Colonic mucosa (tissue), 4 donors: ENCODE measurements at regions of chr15 and their contacts with region 1.

Region 1: GRCh38 chr15:80970018-80970658 is 19.5 kb downstream of the MESD start:
- DNase-seq: peak; percentile 73
- H3K4me3 ChIP-seq: no peak overlapping the region
- H3K27ac ChIP-seq: no peak overlapping the region
- H3K4me1 ChIP-seq: no peaks in the 10 kb centered on the region
- H3K27me3 ChIP-seq: no peaks in the 10 kb centered on the region
- CTCF ChIP-seq: peak; percentile 81

Region 2: DNA sequence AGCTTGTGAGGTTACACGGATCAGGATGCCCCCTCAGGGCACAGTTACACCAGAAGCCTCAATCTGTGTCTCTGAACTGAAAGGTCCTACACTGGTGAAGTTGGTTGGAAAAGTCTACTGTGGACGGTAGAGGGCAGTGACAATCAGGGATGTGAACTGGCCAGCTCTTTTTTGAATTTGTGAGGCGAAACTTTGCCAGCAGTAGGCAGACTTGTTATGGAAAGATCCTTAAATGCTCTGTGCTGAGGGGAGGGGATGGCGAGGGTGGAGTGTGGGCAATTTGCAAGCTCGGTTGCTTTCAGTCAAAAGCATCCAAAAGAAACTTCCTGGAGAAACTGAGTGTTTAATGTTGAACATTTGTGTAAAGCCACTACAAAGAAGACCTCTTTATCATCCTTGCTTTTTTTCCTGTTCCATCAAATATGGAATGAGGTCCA is 402.4 kb before region 1 on chr15:
- intact Hi-C with region 1: loop called (anchors 2 kb)
- DNase-seq: peak; percentile 71
- H3K4me3 ChIP-seq: no peak overlapping the region
- H3K27ac ChIP-seq: no peak overlapping the region
- H3K4me1 ChIP-seq: no peaks in the 10 kb centered on the region
- H3K27me3 ChIP-seq: no peaks in the 10 kb centered on the region
- CTCF ChIP-seq: peak; percentile 56

Region 3: DNA sequence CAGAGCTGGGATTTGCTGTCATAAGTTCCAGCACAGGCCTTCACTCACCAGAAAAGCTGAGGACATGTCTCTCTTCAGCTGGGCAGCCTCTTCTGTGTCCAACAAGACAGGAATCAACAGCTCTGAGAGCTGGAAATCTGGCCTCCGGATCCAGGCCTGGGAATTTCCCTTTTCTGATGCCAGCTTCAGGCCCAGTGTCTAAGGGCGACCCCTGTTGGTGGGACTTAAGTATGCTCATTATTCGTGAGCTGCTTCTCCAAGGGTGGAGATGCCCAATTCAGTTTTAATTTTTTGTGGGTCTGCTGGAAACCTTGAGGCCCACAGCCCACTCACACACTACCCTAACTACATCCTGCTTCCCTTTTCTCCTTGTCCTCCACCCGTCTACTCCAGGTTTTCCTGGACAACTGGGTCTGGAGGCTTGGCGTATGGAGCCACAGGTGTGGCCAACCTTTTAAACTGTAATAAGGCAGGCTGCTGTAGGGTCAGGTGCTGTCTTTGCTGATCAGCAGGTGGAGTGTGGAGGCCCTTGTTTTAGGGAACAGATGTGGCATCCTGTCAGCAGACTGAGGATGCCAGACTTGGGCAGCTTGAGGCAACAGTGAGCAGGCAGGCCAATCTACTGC is 193.6 kb before region 1 on chr15:
- intact Hi-C with region 1: loop called (anchors 2 kb)
- DNase-seq: peak; percentile 84
- H3K4me3 ChIP-seq: no peak overlapping the region
- H3K27ac ChIP-seq: peak overlapping the region; percentile 66
- H3K4me1 ChIP-seq: peaks cover 11% of the 10 kb centered on the region
- H3K27me3 ChIP-seq: peaks cover 17% of the 10 kb centered on the region
- CTCF ChIP-seq: peak; percentile 84

Region 4: DNA sequence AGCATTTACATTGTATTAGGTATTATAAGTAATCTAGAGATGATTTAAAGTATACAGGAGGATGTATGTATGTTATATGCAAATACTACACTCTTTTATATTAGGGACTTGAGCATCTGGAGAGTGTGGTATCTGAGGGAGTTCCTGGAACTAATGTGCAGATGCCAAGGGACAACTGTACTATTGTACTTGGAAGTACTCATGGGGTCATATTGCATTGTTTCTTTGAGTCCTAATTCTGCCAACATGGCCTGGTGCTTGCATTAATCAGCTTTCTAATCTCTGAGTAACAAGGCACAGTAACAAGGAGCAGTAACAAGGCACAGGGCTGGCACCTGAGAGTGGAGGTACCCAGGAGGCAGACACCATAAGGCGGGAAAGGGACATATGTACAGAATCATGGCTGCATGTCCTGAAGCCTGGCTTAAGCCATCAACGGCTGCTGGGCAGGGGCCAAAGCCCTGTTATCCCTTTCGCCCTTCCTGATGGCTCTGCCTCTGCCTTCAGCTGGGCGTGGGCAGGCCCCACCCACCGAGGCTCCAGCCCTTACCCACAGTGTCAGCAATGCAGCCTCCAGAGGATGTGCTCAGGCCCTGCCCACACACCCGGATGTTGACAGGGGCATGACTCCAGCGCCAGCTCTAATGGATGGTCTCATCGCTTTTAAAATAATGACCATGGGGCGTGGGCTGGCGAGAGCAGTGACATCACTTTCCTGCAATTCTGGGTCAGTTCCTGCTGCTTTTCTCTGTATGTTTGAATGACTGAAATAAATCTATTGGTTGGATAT is 168.1 kb before region 1 on chr15:
- intact Hi-C with region 1: no loop called
- DNase-seq: peak; percentile 67
- H3K4me3 ChIP-seq: no peak overlapping the region
- H3K27ac ChIP-seq: no peak overlapping the region
- H3K4me1 ChIP-seq: no peaks in the 10 kb centered on the region
- H3K27me3 ChIP-seq: no peaks in the 10 kb centered on the region
- CTCF ChIP-seq: no peak

Region 5: DNA sequence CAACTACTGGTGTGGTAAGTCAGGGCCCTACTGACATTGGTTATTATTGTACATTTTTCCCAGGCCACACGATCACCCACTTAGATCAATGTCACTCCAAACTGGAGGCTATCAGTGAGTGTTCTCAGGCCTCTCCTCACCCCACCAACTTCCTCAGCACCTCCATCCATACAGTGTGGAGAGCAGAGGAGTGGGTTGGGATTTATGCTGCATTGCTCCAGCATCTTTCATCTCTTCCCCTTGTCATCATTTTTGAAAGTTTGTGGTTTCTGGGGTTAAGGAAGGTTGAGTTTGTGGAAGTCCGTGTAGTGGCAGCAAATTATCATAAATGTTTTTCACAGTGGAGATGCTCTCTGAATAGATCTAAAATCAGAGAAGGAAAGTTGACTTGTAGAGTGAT is 90.8 kb after region 1 on chr15:
- intact Hi-C with region 1: no loop called
- DNase-seq: no peak
- H3K4me3 ChIP-seq: no peak overlapping the region
- H3K27ac ChIP-seq: no peak overlapping the region
- H3K4me1 ChIP-seq: no peaks in the 10 kb centered on the region
- H3K27me3 ChIP-seq: no peaks in the 10 kb centered on the region
- CTCF ChIP-seq: no peak

Region 6: DNA sequence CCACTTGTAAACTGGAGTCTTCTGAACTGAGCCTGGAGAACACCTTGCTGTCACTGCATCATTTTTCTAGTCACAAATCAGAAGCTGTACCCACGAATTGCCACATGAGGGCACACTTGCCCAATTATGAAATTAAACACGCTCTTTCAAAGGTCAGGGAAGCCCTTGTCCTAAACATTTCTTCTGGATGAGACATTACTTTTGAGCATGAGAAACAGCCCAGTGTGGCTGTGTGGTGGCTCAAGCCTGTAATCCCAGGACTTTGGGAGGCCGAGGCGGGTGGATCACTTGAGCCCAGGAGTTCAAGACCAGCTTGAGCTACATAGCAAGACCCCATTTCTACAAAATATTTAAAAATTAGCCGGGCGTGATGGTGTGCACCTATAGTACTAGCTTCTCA is 136.4 kb after region 1 on chr15:
- intact Hi-C with region 1: loop called (anchors 10 kb)
- DNase-seq: peak; percentile 45
- H3K4me3 ChIP-seq: no peak overlapping the region
- H3K27ac ChIP-seq: no peak overlapping the region
- H3K4me1 ChIP-seq: no peaks in the 10 kb centered on the region
- H3K27me3 ChIP-seq: no peaks in the 10 kb centered on the region
- CTCF ChIP-seq: peak; percentile 70